CD4-positive, alpha-beta memory T cell (primary cell): ENCODE measurements at regions of chr6 and their contacts with region 1.

Region 1: GRCh38 chr6:27893059-27893835 is 18.9 kb downstream of the OR2B2 start:
- DNase-seq: peak; percentile 91 to 94 (median 93)
- H3K4me3 ChIP-seq: peak overlapping the region; percentile 72 to 86
- H3K4me3 Mint-ChIP-seq: no peak overlapping the region
- H3K27ac ChIP-seq: peak overlapping the region; percentile 80
- H3K27ac Mint-ChIP-seq: no peak overlapping the region
- H3K4me1 ChIP-seq: peaks cover 30% of the 10 kb centered on the region
- H3K4me1 Mint-ChIP-seq: peaks cover 15 to 40% (median 28%) of the 10 kb centered on the region in 4 donors
- H3K27me3 ChIP-seq: no peaks in the 10 kb centered on the region
- H3K27me3 Mint-ChIP-seq: no peaks in the 10 kb centered on the region

Region 2: GRCh38 chr6:26196846-26197648 is 1696.2 kb before region 1 on chr6:
- CTCF ChIA-PET with region 1: no interaction called
- POLR2A ChIA-PET with region 1: interaction called, 47 read pairs
- intact Hi-C with region 1: loop called (anchors 5 kb)
- DNase-seq: peak; percentile 92 to 93 (median 92)
- H3K4me3 ChIP-seq: peak overlapping the region; percentile 83 to 97
- H3K4me3 Mint-ChIP-seq: peak overlapping the region; percentile 94 to 99 (median 97)
- H3K27ac ChIP-seq: peak overlapping the region; percentile 84
- H3K27ac Mint-ChIP-seq: peak overlapping the region; percentile 96 to 100 (median 98)
- H3K4me1 ChIP-seq: peaks cover 43% of the 10 kb centered on the region
- H3K4me1 Mint-ChIP-seq: peaks cover 23 to 57% (median 41%) of the 10 kb centered on the region in 4 donors
- H3K27me3 ChIP-seq: no peaks in the 10 kb centered on the region
- H3K27me3 Mint-ChIP-seq: no peaks in the 10 kb centered on the region

Region 3: DNA sequence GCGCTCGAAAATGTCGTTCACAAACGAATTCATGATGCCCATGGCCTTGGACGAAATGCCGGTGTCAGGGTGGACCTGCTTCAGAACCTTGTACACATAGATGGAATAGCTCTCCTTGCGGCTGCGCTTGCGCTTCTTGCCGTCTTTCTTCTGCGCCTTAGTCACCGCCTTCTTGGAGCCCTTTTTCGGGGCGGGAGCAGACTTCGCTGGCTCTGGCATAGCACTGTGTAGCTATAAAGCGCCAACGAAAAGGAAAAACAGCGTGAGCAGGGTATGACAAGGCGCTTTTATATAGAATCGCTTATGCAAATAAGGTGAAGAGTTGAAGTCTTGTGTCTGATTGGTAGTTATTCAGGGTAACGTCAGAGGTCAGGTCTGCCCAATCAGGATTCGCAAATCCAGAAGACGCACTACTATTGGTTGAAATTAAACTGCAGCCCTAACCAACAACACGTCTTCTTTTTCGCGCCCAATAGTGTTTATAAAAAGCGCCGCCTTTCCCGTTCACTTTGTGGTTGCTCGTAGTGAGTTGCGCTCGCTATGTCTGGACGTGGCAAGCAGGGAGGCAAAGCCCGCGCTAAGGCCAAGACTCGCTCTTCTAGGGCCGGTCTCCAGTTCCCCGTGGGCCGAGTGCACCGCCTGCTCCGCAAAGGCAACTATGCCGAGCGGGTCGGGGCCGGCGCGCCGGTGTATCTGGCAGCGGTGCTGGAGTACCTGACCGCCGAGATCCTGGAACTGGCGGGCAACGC is 760.5 kb before region 1 on chr6:
- CTCF ChIA-PET with region 1: interaction called, 14 read pairs
- POLR2A ChIA-PET with region 1: interaction called, 137 read pairs
- intact Hi-C with region 1: loop called (anchors 1 kb)
- DNase-seq: peak; percentile 96 to 99 (median 98)
- H3K4me3 ChIP-seq: peak overlapping the region; percentile 72 to 90
- H3K4me3 Mint-ChIP-seq: no peak overlapping the region
- H3K27ac ChIP-seq: peak overlapping the region; percentile 93
- H3K27ac Mint-ChIP-seq: no peak overlapping the region
- H3K4me1 ChIP-seq: peaks cover 27% of the 10 kb centered on the region
- H3K4me1 Mint-ChIP-seq: peaks cover 0 to 24% (median 10%) of the 10 kb centered on the region in 4 donors
- H3K27me3 ChIP-seq: no peaks in the 10 kb centered on the region
- H3K27me3 Mint-ChIP-seq: no peaks in the 10 kb centered on the region

Region 4: DNA sequence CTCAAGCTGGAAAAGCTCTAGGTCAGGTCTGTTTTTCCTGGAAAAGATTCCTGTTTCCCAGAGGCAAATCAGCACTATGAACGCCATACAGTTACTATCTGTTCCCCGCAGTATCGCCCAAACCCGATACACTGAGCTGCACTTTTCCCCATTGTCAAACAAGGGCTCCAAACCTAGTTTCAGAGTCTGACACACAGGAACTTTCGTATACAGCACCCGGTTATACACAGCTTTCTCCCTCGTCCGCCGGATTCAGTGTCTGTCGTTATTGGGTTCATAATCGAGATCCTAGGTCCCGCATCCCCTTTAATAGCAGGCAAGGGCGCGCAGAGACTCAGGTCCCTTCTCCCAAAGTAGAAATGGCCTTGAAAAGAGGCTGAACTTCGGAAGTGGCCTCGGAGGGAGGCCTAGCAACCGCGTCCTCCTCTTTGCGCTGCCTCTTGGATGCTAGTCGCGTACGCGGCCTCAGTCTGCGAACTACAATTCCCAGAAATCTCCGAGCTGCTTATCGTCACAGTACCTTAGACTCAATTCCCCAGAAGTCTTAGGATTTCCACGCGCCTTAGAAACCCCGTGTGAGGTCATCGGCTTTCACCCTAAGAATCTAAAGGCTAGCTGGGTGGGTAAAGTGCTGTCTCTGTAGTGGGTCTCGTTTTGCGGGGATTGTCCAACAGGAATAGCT is 470.5 kb before region 1 on chr6:
- CTCF ChIA-PET with region 1: no interaction called
- POLR2A ChIA-PET with region 1: no interaction called
- intact Hi-C with region 1: no loop called
- DNase-seq: no peak
- H3K4me3 ChIP-seq: no peak overlapping the region
- H3K4me3 Mint-ChIP-seq: no peak overlapping the region
- H3K27ac ChIP-seq: no peak overlapping the region
- H3K27ac Mint-ChIP-seq: no peak overlapping the region
- H3K4me1 ChIP-seq: no peaks in the 10 kb centered on the region
- H3K4me1 Mint-ChIP-seq: no peaks in the 10 kb centered on the region
- H3K27me3 ChIP-seq: no peaks in the 10 kb centered on the region
- H3K27me3 Mint-ChIP-seq: peaks cover 15 to 16% of the 10 kb centered on the region in 2 donors

Region 5: GRCh38 chr6:27472617-27473400 is 420.4 kb before region 1 on chr6 and contains the start of gene ZNF184:
- CTCF ChIA-PET with region 1: interaction called, 3 read pairs
- POLR2A ChIA-PET with region 1: interaction called, 11 read pairs
- intact Hi-C with region 1: loop called (anchors 2 kb)
- DNase-seq: peak; percentile 86 to 90 (median 89)
- H3K4me3 ChIP-seq: peak within 1 kb of the TSS; percentile 70 to 98
- H3K4me3 Mint-ChIP-seq: peak within 1 kb of the TSS; percentile 92 to 99 (median 96)
- H3K27ac ChIP-seq: peak within 1 kb of the TSS; percentile 92
- H3K27ac Mint-ChIP-seq: peak within 1 kb of the TSS; percentile 93 to 99 (median 96)
- H3K4me1 ChIP-seq: peaks cover 56% of the 10 kb centered on the region
- H3K4me1 Mint-ChIP-seq: peaks cover 33 to 65% (median 43%) of the 10 kb centered on the region in 4 donors
- H3K27me3 ChIP-seq: no peaks in the 10 kb centered on the region
- H3K27me3 Mint-ChIP-seq: no peaks in the 10 kb centered on the region
- total RNA-seq, gene ZNF184: 15.2 to 17.4 TPM

Region 6: DNA sequence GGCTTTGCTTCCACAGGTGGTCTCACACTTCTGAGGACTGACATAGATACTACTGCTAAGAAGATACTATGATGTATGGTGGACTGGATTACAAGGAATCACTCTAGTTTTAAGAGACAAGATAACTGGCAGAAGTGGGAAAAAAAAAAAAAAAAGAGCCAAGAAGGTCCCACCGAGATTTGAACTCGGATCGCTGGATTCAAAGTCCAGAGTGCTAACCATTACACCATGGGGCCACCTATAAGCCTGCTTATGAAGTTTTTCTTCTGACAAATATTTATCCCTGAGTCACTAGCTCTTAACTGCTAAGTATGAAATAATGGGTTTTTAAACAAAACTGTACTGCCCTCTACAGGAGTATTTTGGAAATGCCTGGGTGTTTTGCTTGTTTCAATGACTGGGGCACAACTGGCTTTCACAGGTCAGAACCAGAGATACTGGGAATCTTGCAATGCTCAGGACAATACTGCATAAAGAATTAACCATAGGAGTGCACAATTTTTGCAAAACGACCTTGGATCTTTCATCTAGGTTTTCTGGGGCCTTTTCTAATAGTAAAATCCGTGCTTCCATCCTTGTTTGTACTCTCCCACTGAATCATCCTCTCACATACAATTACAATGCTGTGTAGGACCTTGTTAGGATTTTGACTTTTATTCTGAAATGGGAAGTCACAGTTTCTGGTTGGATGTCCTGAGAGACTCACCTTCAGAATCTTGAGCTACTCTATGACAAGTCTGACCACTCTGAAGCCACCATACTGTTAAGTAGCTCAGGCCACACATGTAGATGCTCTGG is 97.4 kb before region 1 on chr6:
- CTCF ChIA-PET with region 1: interaction called, 9 read pairs
- POLR2A ChIA-PET with region 1: interaction called, 44 read pairs
- intact Hi-C with region 1: loop called (anchors 1 kb)
- DNase-seq: peak; percentile 75 to 82 (median 80)
- H3K4me3 ChIP-seq: no peak overlapping the region
- H3K4me3 Mint-ChIP-seq: peak overlapping the region in 1 of 8 donors; percentile 16
- H3K27ac ChIP-seq: no peak overlapping the region
- H3K27ac Mint-ChIP-seq: peak overlapping the region in 5 of 7 donors; percentile 6 to 91 (median 35)
- H3K4me1 ChIP-seq: peaks cover 21% of the 10 kb centered on the region
- H3K4me1 Mint-ChIP-seq: peaks cover 17 to 29% (median 21%) of the 10 kb centered on the region in 4 donors
- H3K27me3 ChIP-seq: peaks cover 6% of the 10 kb centered on the region
- H3K27me3 Mint-ChIP-seq: peaks cover 6 to 13% of the 10 kb centered on the region in 2 donors

Region 7: GRCh38 chr6:27879837-27880236 is 13.4 kb before region 1 on chr6:
- CTCF ChIA-PET with region 1: interaction called, 226 read pairs
- POLR2A ChIA-PET with region 1: interaction called, 827 read pairs
- intact Hi-C with region 1: no loop called
- DNase-seq: no peak
- H3K4me3 ChIP-seq: no peak overlapping the region
- H3K4me3 Mint-ChIP-seq: no peak overlapping the region
- H3K27ac ChIP-seq: no peak overlapping the region
- H3K27ac Mint-ChIP-seq: peak overlapping the region in 1 of 7 donors; percentile 57
- H3K4me1 ChIP-seq: no peaks in the 10 kb centered on the region
- H3K4me1 Mint-ChIP-seq: peaks cover 0 to 3% (median 0%) of the 10 kb centered on the region in 4 donors
- H3K27me3 ChIP-seq: no peaks in the 10 kb centered on the region
- H3K27me3 Mint-ChIP-seq: peaks cover 0 to 1% of the 10 kb centered on the region in 2 donors

Region 8: DNA sequence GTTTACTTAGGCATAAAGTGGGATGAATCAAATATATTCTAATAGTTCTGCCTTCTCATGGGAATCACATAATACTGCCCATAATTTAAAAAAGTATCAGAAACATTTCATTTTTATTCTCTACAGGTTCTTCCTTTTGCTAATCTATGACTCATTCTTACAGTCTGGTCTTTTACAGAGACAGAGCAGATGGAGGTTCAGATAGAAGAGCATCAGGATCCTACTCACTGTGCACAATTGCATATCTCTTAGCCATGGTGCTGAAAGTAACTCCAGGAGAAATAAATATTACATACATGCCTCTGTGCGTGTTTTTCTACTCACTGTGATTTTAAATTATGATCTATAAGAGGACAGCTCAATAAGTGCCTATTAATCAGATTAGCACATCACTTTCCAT is 47.5 kb after region 1 on chr6:
- CTCF ChIA-PET with region 1: no interaction called
- POLR2A ChIA-PET with region 1: no interaction called
- intact Hi-C with region 1: no loop called
- DNase-seq: no peak
- H3K4me3 ChIP-seq: no peak overlapping the region
- H3K4me3 Mint-ChIP-seq: no peak overlapping the region
- H3K27ac ChIP-seq: no peak overlapping the region
- H3K27ac Mint-ChIP-seq: no peak overlapping the region
- H3K4me1 ChIP-seq: no peaks in the 10 kb centered on the region
- H3K4me1 Mint-ChIP-seq: no peaks in the 10 kb centered on the region
- H3K27me3 ChIP-seq: no peaks in the 10 kb centered on the region
- H3K27me3 Mint-ChIP-seq: peaks cover 37 to 41% of the 10 kb centered on the region in 2 donors